Motor neuron (in vitro differentiated cells): ENCODE measurements at regions of chr20 and their contacts with region 1.

Region 1: GRCh38 chr20:23331450-23332350 is 18.9 kb upstream of the NXT1 start:
- ATAC-seq: peak in 2 of 8 experiments; percentile 53 to 71
- H3K4me3 ChIP-seq: no peak overlapping the region
- H3K27ac ChIP-seq: no peak overlapping the region
- H3K4me1 ChIP-seq: peaks cover 0 to under 1% of the 10 kb centered on the region in 2 donors

Region 2: GRCh38 chr20:22691369-22692118 is 640.2 kb before region 1 on chr20:
- in situ Hi-C with region 1: loop called in 6 of 9 experiments (anchors 10 to 25 kb)
- ATAC-seq: peak; percentile 56 to 99 (median 96)
- H3K4me3 ChIP-seq: no peak overlapping the region
- H3K27ac ChIP-seq: no peak overlapping the region
- H3K4me1 ChIP-seq: peaks cover 0 to 4% of the 10 kb centered on the region in 2 donors